AG04450 (cell line): ENCODE measurements at regions of chrX and their contacts with region 1.

Region 1: GRCh38 chrX:28649541-28649940 is 62.3 kb downstream of the IL1RAPL1 start:
- DNase-seq: no peak
- H3K4me3 ChIP-seq: no peak overlapping the region
- H3K27ac ChIP-seq: no peak overlapping the region
- H3K27me3 ChIP-seq: no peaks in the 10 kb centered on the region
- CTCF ChIP-seq: no peak

Region 2: DNA sequence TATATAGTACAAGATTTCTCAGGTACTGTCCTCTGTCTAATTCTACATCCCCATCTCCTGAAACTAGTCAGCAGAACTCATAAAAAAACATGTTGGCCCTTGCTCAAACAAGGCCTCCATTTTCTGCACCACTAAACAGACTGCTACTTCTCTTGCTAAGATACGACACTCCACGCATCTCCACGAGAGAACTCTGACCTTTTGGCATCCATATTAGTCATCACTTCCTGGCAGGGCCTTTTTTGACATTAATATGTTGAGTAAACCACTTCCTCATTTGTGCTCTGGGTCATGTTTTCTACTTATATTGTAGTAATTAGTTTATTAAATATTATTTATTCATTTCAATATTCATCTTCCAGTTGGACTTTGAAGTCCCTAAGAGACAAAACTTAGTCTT is 733.9 kb before region 1 on chrX:
- CTCF ChIA-PET with region 1: no interaction called
- POLR2A ChIA-PET with region 1: no interaction called
- DNase-seq: no peak
- H3K4me3 ChIP-seq: no peak overlapping the region
- H3K27ac ChIP-seq: no peak overlapping the region
- H3K27me3 ChIP-seq: no peaks in the 10 kb centered on the region
- CTCF ChIP-seq: no peak

Region 3: GRCh38 chrX:29042341-29042740 is 392.8 kb after region 1 on chrX:
- CTCF ChIA-PET with region 1: interaction called, 13 read pairs
- POLR2A ChIA-PET with region 1: no interaction called
- DNase-seq: no peak
- H3K4me3 ChIP-seq: no peak overlapping the region
- H3K27ac ChIP-seq: no peak overlapping the region
- H3K27me3 ChIP-seq: no peaks in the 10 kb centered on the region
- CTCF ChIP-seq: no peak

Region 4: DNA sequence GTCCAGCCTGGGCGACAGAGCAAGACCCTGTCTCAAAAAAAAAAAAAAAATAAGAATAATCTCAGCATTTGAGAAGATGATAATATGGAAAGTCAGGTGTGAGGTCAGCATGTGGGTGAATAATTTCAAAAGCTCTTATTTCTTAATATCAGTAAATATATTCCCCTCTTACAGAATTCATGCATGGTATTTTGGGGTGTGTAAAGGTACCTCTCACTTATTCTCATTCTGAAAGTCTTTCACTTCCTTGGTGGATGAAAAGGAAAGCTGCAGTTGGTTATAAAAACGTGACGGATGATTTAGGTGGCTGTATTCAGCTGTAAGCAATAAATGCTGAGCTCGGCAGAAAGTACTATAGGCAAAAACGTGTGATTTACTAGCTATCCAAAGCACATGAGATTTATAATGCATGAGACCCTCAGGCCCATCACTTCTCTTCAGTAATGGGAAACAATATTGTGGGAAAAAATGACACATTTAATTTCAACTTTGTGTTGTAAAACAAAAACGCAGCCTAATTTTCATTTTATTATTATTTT is 1212.7 kb after region 1 on chrX:
- CTCF ChIA-PET with region 1: no interaction called
- POLR2A ChIA-PET with region 1: no interaction called
- DNase-seq: no peak
- H3K4me3 ChIP-seq: no peak overlapping the region
- H3K27ac ChIP-seq: no peak overlapping the region
- H3K27me3 ChIP-seq: no peaks in the 10 kb centered on the region
- CTCF ChIP-seq: no peak